ENCODE measurements at regions of chr21 and their contacts with region 1.

Region 1: DNA sequence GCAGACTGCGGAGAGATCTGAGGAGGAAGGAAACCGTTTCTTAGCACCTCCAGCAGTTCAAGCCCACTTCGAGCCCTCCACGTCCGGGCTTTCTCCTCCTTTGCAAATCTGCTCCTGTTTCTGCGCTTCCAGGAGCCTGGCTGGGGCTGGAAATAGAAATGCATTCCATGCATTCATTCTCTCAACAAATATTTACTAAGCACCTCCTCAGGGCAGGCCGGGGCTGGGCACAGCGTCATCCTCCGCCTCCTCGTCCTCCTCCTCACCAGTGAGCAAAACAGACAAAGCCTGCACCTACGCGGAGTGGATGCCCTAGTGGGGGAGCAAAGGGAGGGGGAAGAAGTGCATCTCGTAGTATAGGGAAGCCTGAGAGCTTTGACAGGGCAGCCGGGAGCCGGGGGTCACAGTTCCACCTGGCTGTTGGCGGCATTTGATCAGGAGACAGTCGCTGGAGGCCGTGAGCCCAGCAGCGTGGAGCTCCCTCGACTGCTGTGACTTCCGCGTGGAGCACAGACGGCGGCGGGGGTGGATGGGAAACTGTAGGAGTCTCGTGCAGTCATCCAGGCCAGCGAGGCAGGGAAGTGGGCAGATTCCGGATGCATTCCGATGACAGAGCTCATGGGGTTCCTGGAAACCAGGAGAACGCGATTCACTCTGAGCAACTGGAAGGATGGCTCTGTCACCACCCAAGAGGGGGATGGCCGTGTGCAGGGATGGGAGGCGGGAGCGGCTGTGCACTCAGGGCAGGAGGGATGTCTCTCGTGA is 93.5 kb downstream of the SIK1 start:
- DNase-seq: peak; percentile 69
- ATAC-seq: peak; percentile 68

Region 2: GRCh38 chr21:43193651-43194302 is 139.7 kb before region 1 on chr21:
- intact Hi-C with region 1: no loop called
- DNase-seq: peak; percentile 72
- ATAC-seq: peak; percentile 68

Region 3: GRCh38 chr21:43295066-43295958 is 38.2 kb before region 1 on chr21:
- intact Hi-C with region 1: loop called (anchors 5 kb)
- DNase-seq: peak; percentile 44
- ATAC-seq: no peak

Measured in Right ventricle myocardium inferior (tissue), 1 donor.